ENCODE measurements at regions of chr12 and their contacts with region 1.

Region 1: DNA sequence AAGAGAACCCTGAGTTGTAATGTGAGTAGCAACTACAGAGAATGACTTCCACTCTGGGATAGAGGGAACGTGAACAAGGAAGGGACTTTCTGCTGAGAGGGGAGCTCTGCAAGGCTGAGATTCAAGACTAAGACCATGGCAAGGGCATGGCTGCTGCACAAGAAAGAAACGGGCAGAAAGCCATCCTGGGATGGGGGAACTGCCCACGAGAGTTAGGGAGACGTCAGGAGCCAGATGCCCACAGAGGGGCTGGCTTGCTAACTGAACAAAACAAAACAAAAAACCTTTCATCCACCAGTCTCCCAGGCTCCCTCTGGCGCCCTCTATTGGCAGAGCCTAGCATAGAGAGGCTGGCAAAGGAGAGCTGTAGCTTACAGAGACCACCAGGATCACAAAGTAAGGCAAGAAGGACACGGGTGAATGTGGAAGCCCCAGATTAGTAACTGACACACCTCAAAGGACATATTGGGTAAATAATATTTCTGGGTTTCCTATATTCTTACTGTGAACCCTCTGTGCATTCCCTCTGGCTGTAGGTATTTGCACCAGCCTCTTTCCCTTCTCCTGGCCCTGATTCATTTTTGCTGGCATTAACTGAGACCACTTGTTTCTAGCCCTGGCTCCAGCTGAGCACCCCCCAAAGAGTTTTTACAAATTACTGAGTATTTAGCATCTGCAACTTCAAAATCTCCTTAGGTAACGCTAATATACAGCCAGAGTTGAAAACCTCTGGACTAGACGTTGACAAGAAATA is 338.3 kb downstream of the EMP1 start:
- DNase-seq: no peak
- H3K4me3 ChIP-seq: no peak overlapping the region
- H3K27me3 ChIP-seq: no peaks in the 10 kb centered on the region
- CTCF ChIP-seq: peak; percentile 97

Region 2: GRCh38 chr12:13255792-13256691 is 278.8 kb before region 1 on chr12:
- CTCF ChIA-PET with region 1: interaction called, 22 read pairs
- POLR2A ChIA-PET with region 1: no interaction called
- DNase-seq: peak; percentile 60
- H3K4me3 ChIP-seq: peak overlapping the region; percentile 37
- H3K27me3 ChIP-seq: no peaks in the 10 kb centered on the region
- CTCF ChIP-seq: peak; percentile 100

Region 3: DNA sequence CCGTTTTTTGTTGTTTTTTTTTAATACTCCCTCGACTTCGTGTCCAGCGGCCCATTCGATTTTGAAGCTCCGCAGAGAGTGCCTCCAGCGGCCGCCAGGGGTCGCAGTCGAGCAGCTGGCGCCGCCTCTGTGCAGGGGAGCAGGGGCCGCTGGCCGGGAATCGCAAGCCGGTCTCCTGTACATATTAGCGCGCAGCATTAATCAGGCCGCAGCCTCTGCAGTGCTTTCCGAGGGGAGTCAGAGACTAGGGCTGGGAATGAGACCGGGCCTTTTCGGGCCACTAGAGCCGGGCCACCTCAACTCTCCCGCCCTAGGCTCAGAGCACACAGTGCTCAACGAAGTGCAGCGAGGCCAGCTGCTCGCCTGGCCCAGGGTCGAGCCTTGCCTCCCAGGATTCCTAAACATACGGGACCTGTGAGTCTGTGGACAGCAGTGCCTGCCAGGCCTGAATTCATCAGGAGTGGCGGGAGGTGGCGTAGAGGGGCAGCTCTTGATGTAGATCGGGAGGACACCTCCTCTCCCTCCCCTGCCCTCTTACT is 256.5 kb before region 1 on chr12:
- CTCF ChIA-PET with region 1: interaction called, 24 read pairs
- POLR2A ChIA-PET with region 1: no interaction called
- DNase-seq: no peak
- H3K4me3 ChIP-seq: no peak overlapping the region
- H3K27me3 ChIP-seq: peaks cover 21% of the 10 kb centered on the region
- CTCF ChIP-seq: peak; percentile 99

Region 4: DNA sequence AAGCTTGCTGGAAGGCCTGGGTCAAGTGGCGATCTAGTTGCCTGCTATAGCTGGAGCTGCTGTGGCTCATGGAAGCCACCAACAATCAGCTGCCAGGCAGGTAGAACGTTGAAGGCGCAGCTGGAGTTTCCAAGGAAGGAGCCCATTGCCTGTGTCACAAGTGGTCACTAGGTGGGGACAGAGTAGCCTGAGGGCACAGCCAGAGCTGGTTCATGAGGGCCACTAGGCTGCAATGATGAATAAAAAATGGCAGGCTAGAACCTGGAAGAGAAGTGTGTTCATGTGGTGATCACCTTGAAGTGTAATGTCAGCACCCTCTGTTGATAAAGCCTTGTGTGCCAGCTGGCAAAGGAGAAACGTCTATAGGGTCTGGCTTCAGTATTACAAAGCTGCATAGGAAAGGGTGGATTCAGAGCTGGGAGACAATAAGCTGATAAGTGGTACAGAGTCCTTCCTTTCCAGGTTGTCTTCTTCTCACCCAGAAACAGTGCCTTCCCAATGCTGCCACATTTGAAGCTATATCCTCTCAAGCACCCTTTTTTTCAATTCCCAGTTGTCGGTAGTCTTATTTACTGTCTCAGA is 172.5 kb before region 1 on chr12:
- CTCF ChIA-PET with region 1: interaction called, 25 read pairs
- POLR2A ChIA-PET with region 1: no interaction called
- DNase-seq: no peak
- H3K4me3 ChIP-seq: no peak overlapping the region
- H3K27me3 ChIP-seq: peaks cover 2% of the 10 kb centered on the region; the same call in 1 of the 2 replicates
- CTCF ChIP-seq: peak; percentile 89

Region 5: GRCh38 chr12:13509740-13510139 is 25.1 kb before region 1 on chr12:
- CTCF ChIA-PET with region 1: interaction called, 12 read pairs
- POLR2A ChIA-PET with region 1: no interaction called
- DNase-seq: no peak
- H3K4me3 ChIP-seq: no peak overlapping the region
- H3K27me3 ChIP-seq: no peaks in the 10 kb centered on the region
- CTCF ChIP-seq: no peak

Region 6: DNA sequence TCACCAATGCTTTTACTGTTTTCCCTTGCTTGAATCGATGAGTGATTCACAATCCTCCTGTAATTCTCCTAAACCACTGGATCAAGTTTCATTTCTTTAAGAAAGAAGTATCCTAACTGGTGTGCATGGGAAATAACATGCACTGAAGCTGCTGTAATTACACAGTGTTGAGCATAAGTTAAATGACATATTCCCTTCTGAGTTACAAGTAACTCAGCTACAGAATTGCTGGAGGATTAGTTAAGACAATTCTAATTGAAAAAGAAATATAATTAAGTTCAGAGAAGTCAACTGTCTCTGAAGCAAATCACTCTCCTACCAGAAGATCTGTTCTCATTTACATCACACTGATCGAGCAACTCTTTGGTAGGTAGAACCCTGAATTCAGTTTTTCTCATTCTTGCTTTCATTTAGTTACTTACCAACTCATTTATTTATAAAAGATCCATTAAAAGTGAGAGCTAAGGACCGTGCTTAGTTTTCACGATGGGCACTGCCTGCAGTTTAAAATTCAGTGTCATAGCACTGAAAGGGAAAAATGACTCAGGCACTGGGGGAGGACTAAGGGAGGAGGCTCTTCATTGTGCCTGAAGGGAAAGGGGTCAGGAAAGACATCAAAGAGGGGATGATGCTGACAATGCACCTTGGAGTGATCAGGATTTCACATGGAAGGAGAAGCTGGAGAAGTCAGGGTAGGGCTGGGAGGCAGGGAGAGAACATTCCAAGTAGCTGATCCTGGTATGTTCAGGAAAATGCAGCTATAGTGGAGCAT is 11.1 kb before region 1 on chr12:
- CTCF ChIA-PET with region 1: interaction called, 10 read pairs
- POLR2A ChIA-PET with region 1: no interaction called
- DNase-seq: no peak
- H3K4me3 ChIP-seq: no peak overlapping the region
- H3K27me3 ChIP-seq: no peaks in the 10 kb centered on the region
- CTCF ChIP-seq: no peak

Region 7: GRCh38 chr12:13546231-13546630 is 11.4 kb after region 1 on chr12:
- CTCF ChIA-PET with region 1: interaction called, 16 read pairs
- POLR2A ChIA-PET with region 1: no interaction called
- DNase-seq: no peak
- H3K4me3 ChIP-seq: no peak overlapping the region
- H3K27me3 ChIP-seq: no peaks in the 10 kb centered on the region
- CTCF ChIP-seq: no peak

Measured in BJ (cell line).